Activated T-helper 2 cell treated with anti-CD3 and anti-CD28 coated beads, Interferon-gamma antibody, Interleukin-2, Interleukin-4, amounts not matched to agents 10 μg/mL and 5 μg/mL and 100 μg/mL, durations not matched to agents 14 hours and 24 hours and 36 hours (primary cell): ENCODE measurements at regions of chr9 and their contacts with region 1.

Region 1: GRCh38 chr9:132240753-132241493 is 79.1 kb downstream of the NTNG2 start:
- DNase-seq: peak; percentile 98
- H3K4me3 Mint-ChIP-seq: peak overlapping the region; percentile 92
- H3K27ac Mint-ChIP-seq: peak overlapping the region; percentile 75
- H3K4me1 Mint-ChIP-seq: peaks cover 6% of the 10 kb centered on the region
- H3K27me3 Mint-ChIP-seq: peaks cover 30% of the 10 kb centered on the region

Region 2: GRCh38 chr9:132169672-132170392 is 71.1 kb before region 1 on chr9:
- intact Hi-C with region 1: loop called (anchors 1 kb)
- DNase-seq: peak; percentile 34
- H3K4me3 Mint-ChIP-seq: no peak overlapping the region
- H3K27ac Mint-ChIP-seq: no peak overlapping the region
- H3K4me1 Mint-ChIP-seq: peaks cover under 1% of the 10 kb centered on the region
- H3K27me3 Mint-ChIP-seq: peaks cover 21% of the 10 kb centered on the region